ENCODE measurements at regions of chr4 and their contacts with region 1.

Region 1: GRCh38 chr4:602559-602942 is 22.8 kb upstream of the PDE6B start:
- DNase-seq: peak; percentile 79
- H3K4me3 Mint-ChIP-seq: no peak overlapping the region
- H3K27ac Mint-ChIP-seq: no peak overlapping the region
- H3K4me1 Mint-ChIP-seq: peaks cover 6% of the 10 kb centered on the region
- H3K27me3 Mint-ChIP-seq: peaks cover 15% of the 10 kb centered on the region
- CTCF ChIP-seq: peak; percentile 97

Region 2: GRCh38 chr4:637536-638280 is 35.2 kb after region 1 on chr4:
- CTCF ChIA-PET with region 1: no interaction called
- POLR2A ChIA-PET with region 1: no interaction called
- intact Hi-C with region 1: no loop called
- DNase-seq: no peak
- H3K4me3 Mint-ChIP-seq: no peak overlapping the region
- H3K27ac Mint-ChIP-seq: no peak overlapping the region
- H3K4me1 Mint-ChIP-seq: no peaks in the 10 kb centered on the region
- H3K27me3 Mint-ChIP-seq: peaks cover 43% of the 10 kb centered on the region
- CTCF ChIP-seq: no peak

Region 3: DNA sequence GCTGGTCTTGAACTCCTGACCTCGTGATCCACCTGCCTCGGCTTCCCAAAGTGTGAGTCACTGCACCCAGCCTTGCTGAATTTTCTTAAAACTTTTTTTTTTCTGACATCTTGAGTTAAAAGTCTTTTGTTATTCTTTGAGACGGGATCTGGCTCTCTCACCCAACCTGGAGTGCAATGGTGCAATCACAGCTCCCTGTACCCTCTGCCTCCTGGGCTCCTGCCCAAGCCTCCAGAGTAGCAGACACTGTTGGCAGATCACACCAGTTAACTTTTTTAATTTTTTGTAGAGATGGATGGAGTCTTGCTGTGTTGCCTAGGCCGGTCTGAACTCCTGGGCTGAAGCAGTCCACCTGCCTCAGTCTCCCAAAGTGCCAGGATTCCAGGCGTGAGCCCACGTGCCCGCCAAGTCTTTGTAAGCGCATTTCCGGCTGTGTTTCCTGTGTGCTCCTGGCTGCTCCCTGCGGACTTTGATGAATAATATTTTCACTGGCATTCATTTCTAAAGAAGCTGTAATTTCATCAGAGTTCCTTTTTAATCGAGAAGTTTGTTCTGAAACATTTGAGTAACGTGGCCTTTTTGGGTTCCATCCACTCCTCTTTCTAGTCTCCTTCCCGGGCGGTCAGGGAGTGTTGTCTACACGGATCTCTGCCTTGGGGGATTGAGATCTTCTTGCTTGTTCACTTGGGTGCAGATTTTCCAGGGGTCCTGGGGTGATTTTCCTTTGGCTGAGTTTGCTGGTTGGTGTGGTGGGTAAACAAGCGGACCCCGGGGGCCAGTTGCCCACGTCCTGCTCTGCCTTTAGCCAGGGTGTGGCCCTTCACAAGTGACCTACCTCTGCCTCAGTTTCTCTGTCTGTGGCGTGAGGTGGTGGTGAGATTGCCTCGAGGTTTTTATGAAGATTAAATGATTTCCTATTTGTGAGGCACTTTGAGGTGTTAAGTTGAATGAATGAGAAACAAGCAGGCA is 147.4 kb after region 1 on chr4:
- CTCF ChIA-PET with region 1: no interaction called
- POLR2A ChIA-PET with region 1: no interaction called
- intact Hi-C with region 1: loop called (anchors 10 kb)
- DNase-seq: peak; percentile 83
- H3K4me3 Mint-ChIP-seq: peak overlapping the region; percentile 26
- H3K27ac Mint-ChIP-seq: peak overlapping the region; percentile 81
- H3K4me1 Mint-ChIP-seq: peaks cover 15% of the 10 kb centered on the region
- H3K27me3 Mint-ChIP-seq: no peaks in the 10 kb centered on the region
- CTCF ChIP-seq: no peak

Measured in MCF 10A (cell line).